PC-3 (cell line): ENCODE measurements at regions of chr15 and their contacts with region 1.

Region 1: GRCh38 chr15:41180206-41180789 is 50.3 kb downstream of the EXD1 start:
- DNase-seq: peak; percentile 23
- ATAC-seq: no peak
- H3K4me3 ChIP-seq: no peak overlapping the region
- H3K27ac ChIP-seq: no peak overlapping the region
- H3K4me1 ChIP-seq: 0 out of 2 replicates have a peak, but pooled peaks cover 5% of the 10 kb centered on the region
- H3K27me3 ChIP-seq: no peaks in the 10 kb centered on the region
- CTCF ChIP-seq: no peak

Region 2: DNA sequence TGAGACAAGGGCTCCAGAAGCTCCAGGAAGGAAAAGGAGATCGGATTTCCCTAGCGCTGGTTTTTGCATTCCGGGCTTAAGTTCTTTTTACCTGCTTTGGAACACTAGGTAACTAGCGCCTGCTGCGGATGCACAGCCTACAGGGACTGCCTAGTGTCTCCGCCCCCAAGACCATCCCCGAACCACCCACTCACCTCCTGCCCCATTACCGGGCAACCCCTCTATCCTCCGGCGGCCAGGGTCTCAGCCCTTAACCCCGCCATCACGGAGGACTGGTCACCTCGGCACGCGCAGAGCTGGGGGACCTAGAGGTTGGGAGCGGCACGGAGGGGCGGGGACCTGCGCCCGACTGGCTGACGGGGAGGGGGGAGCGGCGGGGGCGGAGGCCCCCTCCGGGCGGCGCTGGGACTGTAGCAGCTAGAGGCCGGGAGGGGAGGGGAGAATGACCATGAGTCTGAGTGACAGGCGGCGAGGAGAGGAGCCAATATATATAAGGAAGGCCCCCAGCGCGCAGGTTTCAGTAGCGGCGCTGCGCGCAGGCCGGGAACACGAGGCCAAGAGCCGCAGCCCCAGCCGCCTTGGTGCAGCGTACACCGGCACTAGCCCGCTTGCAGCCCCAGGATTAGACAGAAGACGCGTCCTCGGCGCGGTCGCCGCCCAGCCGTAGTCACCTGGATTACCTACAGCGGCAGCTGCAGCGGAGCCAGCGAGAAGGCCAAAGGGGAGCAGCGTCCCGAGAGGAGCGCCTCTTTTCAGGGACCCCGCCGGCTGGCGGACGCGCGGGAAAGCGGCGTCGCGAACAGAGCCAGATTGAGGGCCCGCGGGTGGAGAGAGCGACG is 251.3 kb before region 1 on chr15 and contains the start of gene DLL4:
- CTCF ChIA-PET with region 1: no interaction called
- POLR2A ChIA-PET with region 1: no interaction called
- intact Hi-C with region 1: loop called (anchors 10 kb)
- DNase-seq: peak; percentile 77
- ATAC-seq: peak; percentile 49
- H3K4me3 ChIP-seq: peak within 1 kb of the TSS; percentile 76
- H3K27ac ChIP-seq: no peak within 1 kb of the TSS
- H3K4me1 ChIP-seq: peaks cover 45% of the 10 kb centered on the region
- H3K27me3 ChIP-seq: peaks cover 25% of the 10 kb centered on the region
- CTCF ChIP-seq: no peak
- total RNA-seq, gene DLL4: 2.2 and 2.9 TPM in 2 replicates

Region 3: GRCh38 chr15:41022487-41023090 is 157.7 kb before region 1 on chr15:
- CTCF ChIA-PET with region 1: no interaction called
- POLR2A ChIA-PET with region 1: no interaction called
- intact Hi-C with region 1: loop called (anchors 10 kb)
- DNase-seq: peak; percentile 68
- ATAC-seq: peak; percentile 69
- H3K4me3 ChIP-seq: no peak overlapping the region
- H3K27ac ChIP-seq: no peak overlapping the region
- H3K4me1 ChIP-seq: peaks cover 13% of the 10 kb centered on the region
- H3K27me3 ChIP-seq: no peaks in the 10 kb centered on the region
- CTCF ChIP-seq: peak; percentile 84

Region 4: DNA sequence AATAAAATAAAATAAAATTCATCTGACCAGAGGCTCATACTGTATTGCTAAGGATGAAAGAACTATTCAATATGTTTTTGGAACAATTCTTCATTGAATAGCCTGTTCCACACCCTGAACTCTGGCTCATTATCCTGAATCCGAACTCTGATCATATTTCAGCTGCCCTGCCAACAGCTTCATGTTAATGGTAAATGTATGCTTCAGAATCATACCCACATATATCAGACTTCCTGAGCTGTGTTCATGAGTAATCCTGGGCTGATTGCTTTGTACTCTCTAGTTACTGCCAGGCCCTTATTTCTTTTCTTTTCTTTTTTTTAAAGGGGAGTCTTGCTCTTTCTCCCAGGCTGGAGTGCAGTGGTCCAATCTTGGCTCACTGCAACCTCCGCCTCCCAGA is 76.1 kb before region 1 on chr15:
- CTCF ChIA-PET with region 1: no interaction called
- POLR2A ChIA-PET with region 1: no interaction called
- intact Hi-C with region 1: loop called (anchors 5 kb)
- DNase-seq: peak; percentile 78
- ATAC-seq: peak; percentile 99
- H3K4me3 ChIP-seq: no peak overlapping the region
- H3K27ac ChIP-seq: peak overlapping the region; percentile 38
- H3K4me1 ChIP-seq: peaks cover 32% of the 10 kb centered on the region
- H3K27me3 ChIP-seq: no peaks in the 10 kb centered on the region
- CTCF ChIP-seq: no peak

Region 5: GRCh38 chr15:41116116-41116871 is 64.0 kb before region 1 on chr15 and contains the start of gene INO80:
- CTCF ChIA-PET with region 1: interaction called, 7 read pairs
- POLR2A ChIA-PET with region 1: no interaction called
- intact Hi-C with region 1: loop called (anchors 5 kb)
- DNase-seq: peak; percentile 99
- ATAC-seq: peak; percentile 88
- H3K4me3 ChIP-seq: peak within 1 kb of the TSS; percentile 89
- H3K27ac ChIP-seq: peak within 1 kb of the TSS; percentile 93
- H3K4me1 ChIP-seq: peaks cover 11% of the 10 kb centered on the region
- H3K27me3 ChIP-seq: no peaks in the 10 kb centered on the region
- CTCF ChIP-seq: no peak
- total RNA-seq, gene INO80: 38.4 and 47.7 TPM in 2 replicates

Region 6: DNA sequence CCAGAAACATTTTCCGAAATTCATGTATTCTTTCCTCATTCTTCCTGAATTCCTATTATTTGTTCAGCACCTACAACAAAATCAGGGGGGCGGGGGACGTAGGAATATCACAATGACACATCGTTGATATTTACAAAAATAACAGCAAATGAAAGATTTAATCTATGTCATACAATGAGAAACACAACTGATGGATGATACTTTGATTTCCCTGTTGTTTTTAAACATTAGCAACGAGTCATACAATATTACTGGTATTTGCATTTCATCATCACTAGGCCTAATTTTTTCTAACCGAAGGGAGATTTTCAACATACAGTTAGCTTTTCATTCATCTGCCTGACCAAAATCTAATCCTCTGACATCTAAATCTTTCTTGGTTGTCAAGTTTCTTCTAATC is 19.0 kb before region 1 on chr15:
- CTCF ChIA-PET with region 1: no interaction called
- POLR2A ChIA-PET with region 1: no interaction called
- intact Hi-C with region 1: no loop called
- DNase-seq: peak; percentile 36
- ATAC-seq: no peak
- H3K4me3 ChIP-seq: no peak overlapping the region
- H3K27ac ChIP-seq: peak overlapping the region; percentile 21
- H3K4me1 ChIP-seq: peaks cover 18% of the 10 kb centered on the region
- H3K27me3 ChIP-seq: no peaks in the 10 kb centered on the region
- CTCF ChIP-seq: no peak

Region 7: GRCh38 chr15:41194444-41194843 is 14.1 kb after region 1 on chr15:
- CTCF ChIA-PET with region 1: interaction called, 17 read pairs
- POLR2A ChIA-PET with region 1: no interaction called
- intact Hi-C with region 1: no loop called
- DNase-seq: no peak
- ATAC-seq: no peak
- H3K4me3 ChIP-seq: no peak overlapping the region
- H3K27ac ChIP-seq: no peak overlapping the region
- H3K4me1 ChIP-seq: no peaks in the 10 kb centered on the region
- H3K27me3 ChIP-seq: no peaks in the 10 kb centered on the region
- CTCF ChIP-seq: no peak

Region 8: GRCh38 chr15:41215708-41216107 is 35.4 kb after region 1 on chr15:
- CTCF ChIA-PET with region 1: no interaction called
- POLR2A ChIA-PET with region 1: no interaction called
- intact Hi-C with region 1: no loop called
- DNase-seq: no peak
- ATAC-seq: no peak
- H3K4me3 ChIP-seq: no peak overlapping the region
- H3K27ac ChIP-seq: no peak overlapping the region
- H3K4me1 ChIP-seq: no peaks in the 10 kb centered on the region
- H3K27me3 ChIP-seq: no peaks in the 10 kb centered on the region
- CTCF ChIP-seq: no peak